Endothelial cell of umbilical vein (primary cell): ENCODE measurements at regions of chr17 and their contacts with region 1.

Region 1: GRCh38 chr17:62671583-62672312 is 44.3 kb downstream of the MRC2 start:
- DNase-seq: no peak
- H3K4me3 ChIP-seq: no peak overlapping the region
- H3K27ac ChIP-seq: no peak overlapping the region
- H3K4me1 ChIP-seq: no peaks in the 10 kb centered on the region
- H3K27me3 ChIP-seq: no peaks in the 10 kb centered on the region
- CTCF ChIP-seq: no peak
- POLR2A ChIP-seq: no peak

Region 2: GRCh38 chr17:62627219-62627910 is 44.4 kb before region 1 on chr17 and contains the start of gene MRC2:
- CTCF ChIA-PET with region 1: interaction called, 3 read pairs
- POLR2A ChIA-PET with region 1: no interaction called
- dilution Hi-C with region 1: no loop called
- intact Hi-C with region 1: loop called (anchors 5 kb)
- DNase-seq: peak; percentile 68
- H3K4me3 ChIP-seq: peak within 1 kb of the TSS; percentile 33 to 63 (median 51)
- H3K27ac ChIP-seq: peak within 1 kb of the TSS; percentile 50
- H3K4me1 ChIP-seq: peaks cover 6% of the 10 kb centered on the region
- H3K27me3 ChIP-seq: no peaks in the 10 kb centered on the region
- CTCF ChIP-seq: peak in 1 of 2 donors; percentile 20
- POLR2A ChIP-seq: peak; percentile 50
- total RNA-seq, gene MRC2: 52.7 and 52.9 TPM in 2 replicates

Region 3: GRCh38 chr17:62703775-62704378 is 32.1 kb after region 1 on chr17:
- CTCF ChIA-PET with region 1: interaction called, 4 read pairs
- POLR2A ChIA-PET with region 1: no interaction called
- dilution Hi-C with region 1: no loop called
- intact Hi-C with region 1: loop called (anchors 1 kb)
- DNase-seq: peak; percentile 44
- H3K4me3 ChIP-seq: peak overlapping the region; percentile 23 to 56 (median 48)
- H3K27ac ChIP-seq: peak overlapping the region; percentile 14
- H3K4me1 ChIP-seq: peaks cover 32% of the 10 kb centered on the region
- H3K27me3 ChIP-seq: peaks cover 0 to 8% of the 10 kb centered on the region in 2 experiments
- CTCF ChIP-seq: peak; percentile 79 to 87
- POLR2A ChIP-seq: no peak

Region 4: DNA sequence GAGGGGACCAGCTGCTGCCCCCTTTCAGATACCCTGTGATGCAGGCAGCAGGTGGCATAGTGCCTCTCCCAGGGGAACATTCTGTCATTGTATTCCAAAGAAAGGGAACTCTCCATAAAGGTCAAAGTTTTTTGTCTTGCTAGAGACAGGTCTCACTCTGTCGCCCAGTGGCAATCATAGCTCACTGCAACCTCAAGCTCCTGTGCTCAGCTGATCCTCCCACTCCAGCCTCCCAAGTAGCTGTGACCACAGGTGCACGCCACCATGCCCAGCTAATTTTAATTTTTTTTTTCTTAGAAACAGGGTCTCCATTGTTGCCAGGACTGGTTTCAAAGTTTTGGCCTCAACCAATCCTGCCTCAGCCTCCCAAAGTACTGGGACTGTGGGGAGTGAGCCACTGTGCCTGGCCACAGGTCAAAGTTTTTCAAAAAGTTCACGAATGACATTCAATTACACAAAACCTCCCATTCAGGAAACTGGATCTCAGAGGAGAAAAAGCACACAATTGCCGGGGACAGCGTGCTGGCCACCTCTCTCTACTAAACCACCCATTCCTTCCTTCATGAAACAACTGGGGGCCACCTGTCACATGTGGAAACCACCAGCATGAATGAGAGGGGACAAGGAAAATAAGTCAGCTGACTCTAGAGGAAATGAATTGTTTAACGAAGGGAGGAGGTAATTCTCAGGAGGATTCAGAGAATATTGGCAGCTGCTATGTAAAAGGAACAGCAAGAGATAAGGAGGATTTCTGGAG is 56.3 kb after region 1 on chr17:
- CTCF ChIA-PET with region 1: interaction called, 26 read pairs
- POLR2A ChIA-PET with region 1: no interaction called
- dilution Hi-C with region 1: no loop called
- intact Hi-C with region 1: no loop called
- DNase-seq: peak; percentile 11
- H3K4me3 ChIP-seq: no peak overlapping the region
- H3K27ac ChIP-seq: no peak overlapping the region
- H3K4me1 ChIP-seq: peaks cover 3% of the 10 kb centered on the region
- H3K27me3 ChIP-seq: peaks cover 3 to 5% of the 10 kb centered on the region in 2 experiments
- CTCF ChIP-seq: no peak
- POLR2A ChIP-seq: no peak

Region 5: GRCh38 chr17:62995377-62995885 is 323.7 kb after region 1 on chr17:
- CTCF ChIA-PET with region 1: interaction called, 11 read pairs
- POLR2A ChIA-PET with region 1: no interaction called
- dilution Hi-C with region 1: no loop called
- intact Hi-C with region 1: no loop called
- DNase-seq: peak; percentile 45
- H3K4me3 ChIP-seq: no peak overlapping the region
- H3K27ac ChIP-seq: no peak overlapping the region
- H3K4me1 ChIP-seq: peaks cover 2% of the 10 kb centered on the region
- H3K27me3 ChIP-seq: no peaks in the 10 kb centered on the region
- CTCF ChIP-seq: peak; percentile 46 to 57
- POLR2A ChIP-seq: no peak